BJ (cell line): ENCODE measurements at regions of chr20 and their contacts with region 1.

Region 1: DNA sequence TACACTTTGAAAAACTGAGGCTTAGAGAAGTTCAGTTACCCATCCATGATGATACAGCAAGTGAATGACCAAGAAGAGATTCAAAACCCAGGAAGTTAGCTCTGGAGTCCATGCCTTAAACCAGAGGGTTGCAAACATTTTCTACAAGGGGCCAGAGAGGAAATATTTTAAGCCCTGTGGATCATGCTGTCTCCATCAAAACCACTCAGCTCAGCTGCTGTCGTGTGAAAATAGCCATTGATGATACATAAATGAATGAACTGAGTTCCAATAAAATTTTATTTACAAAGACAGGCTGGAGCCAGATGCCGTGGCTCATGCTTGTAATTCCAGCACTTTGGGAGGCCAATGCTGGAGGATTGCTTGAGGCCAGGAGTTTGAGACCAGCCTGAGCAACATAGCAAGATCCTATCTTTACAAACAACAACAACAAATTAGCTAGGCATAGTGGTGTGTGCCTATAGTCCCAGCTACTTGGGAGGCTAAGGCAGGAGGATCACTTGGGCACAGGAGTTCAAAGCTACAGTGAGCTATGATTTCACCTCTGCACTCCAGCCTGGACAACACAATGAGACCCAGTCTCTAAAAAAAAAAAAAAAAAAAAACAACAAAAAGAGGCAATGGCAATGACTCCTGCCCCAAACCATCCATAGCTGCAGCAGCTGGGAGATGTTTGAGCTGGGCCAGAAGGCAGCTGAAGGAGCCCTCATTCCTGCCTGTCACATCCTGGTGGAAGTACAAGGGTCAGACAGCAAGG is 44.1 kb upstream of the RIN2 start:
- DNase-seq: no peak
- H3K4me3 ChIP-seq: no peak overlapping the region
- H3K27me3 ChIP-seq: no peaks in the 10 kb centered on the region
- CTCF ChIP-seq: no peak

Region 2: DNA sequence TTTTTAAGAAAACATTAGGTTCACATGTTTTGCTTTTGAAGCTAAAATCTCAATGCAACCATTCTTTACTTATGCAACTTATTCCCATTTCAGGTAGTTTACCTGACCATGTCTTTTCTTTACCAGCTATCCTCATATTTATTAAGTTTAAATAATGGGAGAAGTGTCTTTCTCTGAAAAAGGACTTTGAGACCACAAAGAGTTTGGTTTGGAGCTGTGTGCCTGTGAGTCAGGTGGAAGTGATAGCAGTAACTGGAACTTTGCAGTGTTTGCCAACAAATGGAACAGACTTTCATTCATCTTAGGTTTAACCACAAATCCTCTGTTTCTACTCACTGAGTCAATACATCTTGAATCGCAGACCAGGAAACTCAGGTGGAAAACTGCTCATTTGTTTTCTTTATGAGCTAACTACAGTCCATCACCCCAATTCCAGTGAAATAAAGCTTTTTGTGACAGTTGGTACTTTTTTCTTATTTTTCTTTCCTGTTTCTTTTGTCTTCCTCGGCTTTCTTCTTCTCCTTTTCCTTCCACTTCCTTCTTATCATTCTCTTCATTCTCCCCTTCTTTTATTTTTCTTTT is 104.3 kb before region 1 on chr20:
- CTCF ChIA-PET with region 1: no interaction called
- POLR2A ChIA-PET with region 1: no interaction called
- DNase-seq: no peak
- H3K4me3 ChIP-seq: no peak overlapping the region
- H3K27me3 ChIP-seq: no peaks in the 10 kb centered on the region
- CTCF ChIP-seq: no peak

Region 3: DNA sequence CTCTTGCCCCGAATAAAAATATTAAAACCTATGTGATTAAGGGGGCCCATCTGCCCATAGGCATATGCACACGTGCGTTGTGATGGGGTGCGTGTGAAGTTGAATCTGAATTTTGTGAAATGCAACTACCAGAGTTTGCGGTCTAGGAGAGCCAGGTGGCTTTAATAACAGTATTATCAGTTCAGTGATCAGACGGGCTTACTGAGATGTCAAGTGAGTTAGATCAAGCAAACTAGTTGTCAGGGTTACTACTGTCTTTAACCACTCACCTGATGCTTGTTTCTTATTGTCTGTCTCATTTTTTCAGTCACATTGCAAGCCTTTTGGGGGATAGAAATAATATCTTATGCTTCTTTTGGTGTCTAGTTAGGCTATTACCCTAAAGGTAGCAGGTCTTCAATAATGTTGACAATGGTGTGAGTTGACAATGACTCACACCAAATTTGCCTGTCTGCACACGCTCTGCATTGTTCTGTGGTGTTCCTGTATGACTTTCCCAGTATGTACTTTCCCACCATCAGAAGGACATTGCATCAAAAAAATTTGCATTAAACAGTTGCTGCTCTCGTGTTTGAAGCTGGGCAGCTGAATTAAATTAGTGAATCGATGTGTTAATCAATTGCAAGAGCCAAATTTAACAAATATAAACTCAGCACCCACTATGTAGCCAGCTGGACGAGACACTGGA is 200.1 kb after region 1 on chr20:
- CTCF ChIA-PET with region 1: no interaction called
- POLR2A ChIA-PET with region 1: interaction called, 13 read pairs
- DNase-seq: no peak
- H3K4me3 ChIP-seq: no peak overlapping the region
- H3K27me3 ChIP-seq: no peaks in the 10 kb centered on the region
- CTCF ChIP-seq: no peak